PC-3 (cell line): ENCODE measurements at regions of chr10 and their contacts with region 1.

Region 1: GRCh38 chr10:28676968-28677887 is at the start of gene BAMBI:
- DNase-seq: peak; percentile 89
- ATAC-seq: peak; percentile 89
- H3K4me3 ChIP-seq: peak within 1 kb of the TSS; percentile 96
- H3K27ac ChIP-seq: no peak within 1 kb of the TSS
- H3K4me1 ChIP-seq: peaks cover 11% of the 10 kb centered on the region
- H3K27me3 ChIP-seq: no peaks in the 10 kb centered on the region
- CTCF ChIP-seq: peak; percentile 46; the same call in 1 of the 2 replicates
- total RNA-seq, gene BAMBI: 9.6 and 10.7 TPM in 2 replicates

Region 2: GRCh38 chr10:28479425-28479865 is 197.8 kb before region 1 on chr10:
- CTCF ChIA-PET with region 1: no interaction called
- POLR2A ChIA-PET with region 1: no interaction called
- intact Hi-C with region 1: no loop called
- DNase-seq: no peak
- ATAC-seq: no peak
- H3K4me3 ChIP-seq: no peak overlapping the region
- H3K27ac ChIP-seq: no peak overlapping the region
- H3K4me1 ChIP-seq: no peaks in the 10 kb centered on the region
- H3K27me3 ChIP-seq: no peaks in the 10 kb centered on the region
- CTCF ChIP-seq: no peak

Region 3: GRCh38 chr10:28714402-28715053 is 37.3 kb after region 1 on chr10:
- CTCF ChIA-PET with region 1: no interaction called
- POLR2A ChIA-PET with region 1: no interaction called
- intact Hi-C with region 1: no loop called
- DNase-seq: no peak
- ATAC-seq: no peak
- H3K4me3 ChIP-seq: no peak overlapping the region
- H3K27ac ChIP-seq: no peak overlapping the region
- H3K4me1 ChIP-seq: peaks cover 3% of the 10 kb centered on the region; the same call in 1 of the 2 replicates
- H3K27me3 ChIP-seq: no peaks in the 10 kb centered on the region
- CTCF ChIP-seq: no peak

Region 4: DNA sequence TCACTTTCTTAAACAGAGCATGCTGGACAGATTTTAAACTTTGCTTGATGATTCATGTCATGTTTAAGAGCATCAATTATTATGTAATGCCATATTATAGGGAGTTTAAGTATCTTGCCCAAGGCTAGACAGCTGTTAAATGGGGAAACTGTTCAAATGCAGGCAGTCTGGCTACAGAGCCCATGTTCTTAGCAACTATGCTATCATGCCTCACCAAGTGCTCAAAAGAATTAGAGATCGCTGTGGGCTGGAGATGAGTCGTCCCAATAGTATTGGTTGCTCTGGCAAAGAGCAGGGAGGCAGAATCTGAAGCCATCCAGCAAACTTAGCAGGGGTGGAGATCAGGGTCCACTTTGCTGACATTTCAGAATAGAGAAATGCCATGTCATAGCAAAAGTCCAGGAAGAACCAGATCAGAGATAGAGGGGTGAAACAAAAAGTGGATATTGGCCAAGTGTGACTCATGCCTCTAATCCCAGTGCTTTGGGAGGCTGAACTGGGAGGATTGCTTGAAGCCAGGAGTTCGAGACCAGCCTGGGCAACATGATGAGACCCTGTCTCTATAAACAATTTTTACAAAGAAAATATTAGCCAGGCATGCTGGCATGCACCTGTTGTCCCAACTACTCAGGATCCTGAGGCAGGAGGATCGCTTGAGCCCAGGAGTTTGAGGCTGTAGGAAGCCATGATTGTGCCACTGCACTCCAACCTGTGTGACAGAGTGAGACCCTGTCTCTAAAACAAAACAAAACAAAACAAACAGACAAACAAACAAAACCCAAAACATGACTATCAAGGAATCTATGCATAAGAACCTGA is 57.9 kb after region 1 on chr10:
- CTCF ChIA-PET with region 1: no interaction called
- POLR2A ChIA-PET with region 1: no interaction called
- intact Hi-C with region 1: loop called (anchors 2 kb)
- DNase-seq: peak; percentile 96
- ATAC-seq: peak; percentile 98
- H3K4me3 ChIP-seq: no peak overlapping the region
- H3K27ac ChIP-seq: peak overlapping the region; percentile 49
- H3K4me1 ChIP-seq: no peaks in the 10 kb centered on the region
- H3K27me3 ChIP-seq: no peaks in the 10 kb centered on the region
- CTCF ChIP-seq: no peak

Region 5: GRCh38 chr10:28879875-28880682 is 202.9 kb after region 1 on chr10:
- CTCF ChIA-PET with region 1: no interaction called
- POLR2A ChIA-PET with region 1: no interaction called
- intact Hi-C with region 1: loop called (anchors 5 kb)
- DNase-seq: no peak
- ATAC-seq: no peak
- H3K4me3 ChIP-seq: no peak overlapping the region
- H3K27ac ChIP-seq: no peak overlapping the region
- H3K4me1 ChIP-seq: peaks cover 23% of the 10 kb centered on the region
- H3K27me3 ChIP-seq: no peaks in the 10 kb centered on the region
- CTCF ChIP-seq: no peak

Region 6: DNA sequence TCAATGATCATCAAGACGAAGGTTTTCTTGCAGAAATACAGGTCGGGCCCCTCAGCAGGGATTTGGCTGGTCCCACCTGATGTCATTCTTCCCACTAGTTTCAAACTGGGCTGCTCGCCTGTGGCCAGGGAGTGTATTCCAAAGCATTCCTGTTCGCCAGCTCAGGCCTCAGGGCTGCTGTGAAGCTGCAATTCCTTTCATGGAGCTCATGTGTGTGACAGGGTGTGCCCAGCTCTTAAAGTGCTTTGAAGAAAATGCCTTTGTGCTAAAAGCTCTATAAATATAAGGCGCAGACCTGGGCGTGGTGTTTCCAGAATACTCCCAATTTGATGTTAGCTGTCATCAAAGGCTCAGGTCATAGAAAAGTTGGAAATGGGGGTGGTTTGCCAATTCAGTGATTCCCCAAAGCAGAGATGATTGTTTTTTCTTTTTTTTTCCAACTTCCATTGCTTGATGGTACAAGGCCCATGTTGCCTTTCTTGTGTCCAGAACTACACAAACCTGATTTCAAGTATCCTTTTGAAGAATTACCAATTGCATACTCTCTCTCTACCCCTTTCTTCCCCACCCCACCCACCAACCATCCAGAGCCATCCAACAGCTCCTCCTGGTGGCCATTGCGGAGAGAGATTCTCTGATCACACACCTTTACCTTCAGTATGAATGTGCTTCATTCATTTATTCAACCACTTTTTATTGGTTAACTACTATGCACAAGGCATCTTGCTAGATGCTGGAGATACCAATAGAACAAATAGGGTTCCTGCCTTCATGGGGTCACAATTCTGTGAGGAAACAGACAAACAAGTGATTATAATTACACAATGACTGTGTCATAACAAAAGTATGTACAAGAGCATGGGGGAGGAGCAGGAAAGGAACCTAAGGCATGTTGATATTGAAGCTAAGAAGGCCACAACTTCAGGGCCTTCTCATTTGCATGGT is 314.4 kb after region 1 on chr10:
- CTCF ChIA-PET with region 1: interaction called, 4 read pairs
- POLR2A ChIA-PET with region 1: no interaction called
- intact Hi-C with region 1: loop called (anchors 5 kb)
- DNase-seq: peak; percentile 80
- ATAC-seq: peak; percentile 93
- H3K4me3 ChIP-seq: no peak overlapping the region
- H3K27ac ChIP-seq: peak overlapping the region; percentile 68
- H3K4me1 ChIP-seq: peaks cover 21% of the 10 kb centered on the region
- H3K27me3 ChIP-seq: no peaks in the 10 kb centered on the region
- CTCF ChIP-seq: peak; percentile 91